Activated CD4-positive, alpha-beta T cell treated with anti-CD3 and anti-CD28 coated beads, Interleukin-2, amount 10 ng/mL, durations not matched to agents 24 days and 14 days (primary cell): ENCODE measurements at regions of chr15 and their contacts with region 1.

Region 1: GRCh38 chr15:91469632-91470567 is 369.8 kb downstream of the SV2B start:
- DNase-seq: peak; percentile 88
- H3K4me3 Mint-ChIP-seq: peak overlapping the region; percentile 69
- H3K27ac Mint-ChIP-seq: peak overlapping the region; percentile 84
- H3K4me1 Mint-ChIP-seq: peaks cover 44% of the 10 kb centered on the region
- H3K27me3 Mint-ChIP-seq: no peaks in the 10 kb centered on the region

Region 2: GRCh38 chr15:91308855-91309254 is 161.0 kb before region 1 on chr15:
- intact Hi-C with region 1: loop called (anchors 1 kb)
- DNase-seq: peak; percentile 56
- H3K4me3 Mint-ChIP-seq: peak overlapping the region; percentile 7
- H3K27ac Mint-ChIP-seq: no peak overlapping the region
- H3K4me1 Mint-ChIP-seq: peaks cover 47% of the 10 kb centered on the region
- H3K27me3 Mint-ChIP-seq: peaks cover 54% of the 10 kb centered on the region

Region 3: GRCh38 chr15:92625251-92625980 is 1155.5 kb after region 1 on chr15:
- intact Hi-C with region 1: loop called (anchors 5 kb)
- DNase-seq: no peak
- H3K4me3 Mint-ChIP-seq: peak overlapping the region; percentile 36
- H3K27ac Mint-ChIP-seq: peak overlapping the region; percentile 77
- H3K4me1 Mint-ChIP-seq: peaks cover 13% of the 10 kb centered on the region
- H3K27me3 Mint-ChIP-seq: peaks cover 4% of the 10 kb centered on the region